Naive thymus-derived CD8-positive, alpha-beta T cell (primary cell): ENCODE measurements at regions of chr5 and their contacts with region 1.

Region 1: DNA sequence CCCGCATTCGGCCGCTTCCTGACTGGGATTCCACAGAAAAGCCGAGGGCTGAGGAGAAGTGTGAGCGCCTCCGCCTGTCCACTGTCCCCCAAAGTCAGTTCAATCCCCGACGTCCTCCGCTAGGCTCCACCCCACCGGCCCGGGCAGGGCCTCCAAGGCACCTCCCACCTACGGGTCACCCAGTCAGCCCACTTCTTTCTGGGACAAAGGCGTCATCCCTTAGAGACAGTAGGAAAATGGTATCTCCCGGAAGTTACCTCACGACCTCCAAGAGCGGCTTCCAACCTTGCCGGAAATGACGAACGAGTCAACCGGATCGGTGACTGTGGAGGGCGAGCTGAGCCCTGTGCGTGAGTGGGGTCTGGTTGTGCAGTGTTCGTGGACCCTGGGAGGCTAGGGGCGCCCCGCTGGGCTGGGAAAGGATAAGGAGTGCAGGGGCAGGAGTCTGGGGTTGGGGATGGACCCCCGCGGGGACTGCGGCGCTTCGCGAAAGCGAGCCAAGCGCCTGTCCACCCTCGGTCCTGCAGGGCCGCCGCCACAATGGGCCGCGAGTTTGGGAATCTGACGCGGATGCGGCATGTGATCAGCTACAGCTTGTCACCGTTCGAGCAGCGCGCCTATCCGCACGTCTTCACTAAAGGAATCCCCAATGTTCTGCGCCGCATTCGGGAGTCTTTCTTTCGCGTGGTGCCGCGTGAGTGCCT is at the starts of genes GDF9 and UQCRQ:
- DNase-seq: peak; percentile 74 to 97 (median 92)
- ATAC-seq: peak; percentile 93 to 96
- H3K4me3 Mint-ChIP-seq: peak within 1 kb of the TSS; percentile 93 to 100 (median 99)
- H3K27ac Mint-ChIP-seq: peak within 1 kb of the TSS; percentile 98 to 100 (median 100)
- H3K4me1 Mint-ChIP-seq: peaks cover 13 to 28% (median 27%) of the 10 kb centered on the region in 4 donors
- H3K27me3 Mint-ChIP-seq: no peaks in the 10 kb centered on the region
- polyA plus RNA-seq, gene GDF9: 0.30 to 0.45 TPM in 2 of 3 donors, not detected in the other
- polyA plus RNA-seq, gene UQCRQ: 594 to 702 (median 638) TPM

Region 2: GRCh38 chr5:132951897-132952296 is 85.4 kb after region 1 on chr5:
- POLR2A ChIA-PET with region 1: no interaction called
- DNase-seq: no peak
- ATAC-seq: no peak
- H3K4me3 Mint-ChIP-seq: peak overlapping the region in 1 of 10 donors; percentile 1
- H3K27ac Mint-ChIP-seq: no peak overlapping the region
- H3K4me1 Mint-ChIP-seq: peaks cover 37 to 74% (median 66%) of the 10 kb centered on the region in 4 donors
- H3K27me3 Mint-ChIP-seq: no peaks in the 10 kb centered on the region

Region 3: DNA sequence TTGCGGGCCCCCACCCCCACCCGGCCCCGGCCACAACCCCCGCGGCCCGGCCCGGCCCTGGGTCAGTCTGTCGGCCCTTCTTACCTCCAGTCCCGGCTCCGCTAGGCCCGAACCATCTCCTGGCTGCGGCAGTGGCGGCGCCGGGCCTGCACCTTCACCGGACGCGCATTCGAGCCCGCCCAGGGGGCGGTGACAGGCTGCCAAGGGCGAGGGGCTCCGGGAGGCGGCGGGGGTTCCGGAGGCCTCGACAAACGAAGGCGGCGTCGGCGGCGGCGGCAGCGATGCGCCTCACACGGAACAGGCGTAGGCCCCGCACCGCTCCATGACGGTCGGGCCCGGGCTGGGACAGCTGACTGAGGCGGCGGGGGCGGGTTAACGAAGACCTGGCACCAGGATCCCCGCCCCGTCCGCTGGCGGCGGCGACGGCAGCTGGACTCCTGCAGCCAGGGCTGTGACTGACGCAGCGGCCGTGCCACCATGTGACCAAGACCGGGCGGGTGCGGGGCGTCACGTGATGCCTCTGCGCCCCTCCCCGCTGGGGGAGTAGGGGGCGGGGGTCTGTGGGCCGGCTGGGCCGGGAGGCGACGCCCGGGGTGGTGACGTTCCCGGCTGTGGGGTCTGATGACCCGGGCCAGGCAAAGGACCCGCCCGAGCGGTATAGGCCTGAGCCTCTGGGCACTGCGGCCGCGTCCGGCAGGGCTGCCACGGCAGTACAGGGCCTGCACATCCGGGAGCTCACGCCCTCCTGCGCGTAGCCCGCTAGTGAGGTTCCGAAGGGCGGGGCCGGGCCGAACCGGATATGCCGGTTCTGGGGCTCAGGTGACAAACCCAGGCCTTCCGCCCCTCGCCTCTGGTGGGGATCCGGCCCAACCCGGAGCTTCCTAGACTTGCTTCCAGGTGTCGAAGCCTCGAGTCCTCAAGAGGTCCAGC is 96.9 kb after region 1 on chr5 and contains the start of gene AFF4:
- POLR2A ChIA-PET with region 1: interaction called, 18 read pairs
- DNase-seq: peak; percentile 74 to 93 (median 86)
- ATAC-seq: peak; percentile 78 to 81
- H3K4me3 Mint-ChIP-seq: peak within 1 kb of the TSS; percentile 86 to 99 (median 96)
- H3K27ac Mint-ChIP-seq: peak within 1 kb of the TSS; percentile 95 to 100 (median 98)
- H3K4me1 Mint-ChIP-seq: peaks cover 6 to 41% (median 37%) of the 10 kb centered on the region in 4 donors
- H3K27me3 Mint-ChIP-seq: no peaks in the 10 kb centered on the region
- polyA plus RNA-seq, gene AFF4: 16.5 to 20.9 (median 17.7) TPM